ENCODE measurements at regions of chr12 and their contacts with region 1.

Region 1: DNA sequence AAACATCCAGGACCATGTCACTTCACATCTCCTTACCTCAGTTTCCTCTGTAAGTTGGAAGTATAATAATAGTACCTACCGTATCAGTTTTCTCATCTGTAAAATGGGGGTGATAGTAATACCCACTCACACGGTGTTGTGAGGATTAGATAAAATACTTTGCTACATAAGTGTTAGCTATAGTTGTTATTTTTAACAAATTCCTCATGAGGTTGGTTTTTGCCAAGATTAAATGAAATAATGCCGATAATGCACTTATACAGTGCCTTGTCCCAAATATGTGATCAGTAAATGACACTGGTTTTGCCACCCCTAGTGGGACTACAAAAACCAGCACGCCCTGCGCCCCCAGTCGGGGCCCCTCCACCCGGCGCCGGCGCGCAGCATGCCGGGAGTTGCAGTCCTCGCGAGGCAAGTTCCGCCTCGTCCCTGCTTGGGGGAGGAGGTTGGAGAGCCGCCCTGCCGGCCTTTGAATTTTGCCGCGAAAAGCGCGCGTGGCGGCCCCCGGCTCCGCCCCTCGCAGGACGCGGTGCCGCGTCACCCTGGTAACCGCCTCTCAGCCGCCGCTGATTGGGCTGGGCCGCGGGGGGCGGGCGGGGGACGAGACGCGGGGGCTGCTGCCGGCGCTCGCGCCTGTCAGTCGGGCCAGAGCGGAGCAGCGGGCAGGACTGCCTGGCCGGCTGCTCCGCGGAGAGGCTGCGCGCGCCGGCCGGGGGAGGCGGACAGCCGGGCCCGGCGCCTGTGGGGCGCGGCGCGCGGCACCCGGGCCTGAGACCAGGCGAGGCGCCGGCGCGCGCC is at the start of gene FAM222A:
- DNase-seq: peak; percentile 93 to 96
- ATAC-seq: peak; percentile 84 to 85
- H3K4me3 ChIP-seq: peak within 1 kb of the TSS; percentile 57 to 77 (median 60)
- H3K27ac ChIP-seq: peak within 1 kb of the TSS; percentile 73 to 88 (median 82)
- H3K4me1 ChIP-seq: peaks cover 27 to 28% of the 10 kb centered on the region in 2 donors
- H3K27me3 ChIP-seq: no peaks in the 10 kb centered on the region
- CTCF ChIP-seq: peak in 3 of 5 experiments; percentile 14 to 42 (median 16)
- POLR2A ChIP-seq: peak; percentile 87 to 89
- total RNA-seq, gene FAM222A: 7.0 to 24.3 (median 13.5) TPM

Region 2: GRCh38 chr12:109529691-109530640 is 183.4 kb before region 1 on chr12:
- in situ Hi-C with region 1: no loop called
- intact Hi-C with region 1: no loop called
- DNase-seq: no peak
- ATAC-seq: no peak
- H3K4me3 ChIP-seq: no peak overlapping the region
- H3K27ac ChIP-seq: no peak overlapping the region
- H3K4me1 ChIP-seq: no peaks in the 10 kb centered on the region
- H3K27me3 ChIP-seq: no peaks in the 10 kb centered on the region
- CTCF ChIP-seq: no peak
- POLR2A ChIP-seq: no peak

Region 3: GRCh38 chr12:109573029-109573913 is 140.1 kb before region 1 on chr12 and contains the starts of genes MMAB and MVK:
- in situ Hi-C with region 1: no loop called
- intact Hi-C with region 1: loop called (anchors 1 kb)
- DNase-seq: peak; percentile 100
- ATAC-seq: peak; percentile 99
- H3K4me3 ChIP-seq: peak within 1 kb of the TSS; percentile 66 to 85 (median 79)
- H3K27ac ChIP-seq: peak within 1 kb of the TSS; percentile 84 to 95 (median 90)
- H3K4me1 ChIP-seq: peaks cover 18% of the 10 kb centered on the region in 2 donors
- H3K27me3 ChIP-seq: no peaks in the 10 kb centered on the region
- CTCF ChIP-seq: no peak
- POLR2A ChIP-seq: peak; percentile 65 to 79
- total RNA-seq, gene MMAB: 21.2 to 54.3 (median 25.6) TPM
- total RNA-seq, gene MVK: 3.2 to 14.2 (median 9.1) TPM

Region 4: DNA sequence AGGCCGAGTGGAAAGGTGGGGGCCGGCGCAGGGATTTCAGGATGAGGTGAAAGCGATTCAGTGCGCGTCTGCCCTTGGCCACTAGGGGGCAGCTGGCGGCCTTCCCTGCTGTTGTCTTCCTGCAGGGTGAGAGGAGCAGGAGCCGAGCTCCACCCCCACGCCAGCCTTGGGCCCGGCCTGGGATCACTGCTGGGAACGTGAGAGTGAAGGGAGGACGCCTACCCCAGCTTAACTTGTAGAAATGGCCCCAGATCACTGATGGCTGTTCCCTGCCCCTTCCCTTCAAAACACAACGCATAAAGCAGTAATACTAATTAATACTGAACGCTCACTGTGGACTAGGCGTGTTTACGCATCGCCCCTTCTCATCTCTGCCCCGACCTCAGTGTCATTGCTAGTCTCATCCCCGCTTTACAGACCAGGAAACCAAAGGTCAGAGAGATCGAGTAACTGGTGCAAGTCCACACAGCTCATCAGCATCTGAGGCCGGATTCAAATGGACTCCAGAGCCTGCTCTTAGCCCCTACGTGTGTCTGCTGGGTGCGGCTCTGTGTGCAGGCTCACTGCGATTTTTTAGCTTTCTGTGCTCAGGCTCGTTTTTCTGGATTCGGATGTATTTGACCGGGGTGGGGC is 115.5 kb before region 1 on chr12:
- in situ Hi-C with region 1: no loop called
- intact Hi-C with region 1: loop called (anchors 2 kb)
- DNase-seq: peak; percentile 76 to 81
- ATAC-seq: peak; percentile 53 to 60
- H3K4me3 ChIP-seq: no peak overlapping the region
- H3K27ac ChIP-seq: peak overlapping the region; percentile 8 to 61 (median 45)
- H3K4me1 ChIP-seq: peaks cover 22 to 31% of the 10 kb centered on the region in 2 donors
- H3K27me3 ChIP-seq: no peaks in the 10 kb centered on the region
- CTCF ChIP-seq: peak; percentile 94 to 98 (median 95)
- POLR2A ChIP-seq: no peak

Region 5: DNA sequence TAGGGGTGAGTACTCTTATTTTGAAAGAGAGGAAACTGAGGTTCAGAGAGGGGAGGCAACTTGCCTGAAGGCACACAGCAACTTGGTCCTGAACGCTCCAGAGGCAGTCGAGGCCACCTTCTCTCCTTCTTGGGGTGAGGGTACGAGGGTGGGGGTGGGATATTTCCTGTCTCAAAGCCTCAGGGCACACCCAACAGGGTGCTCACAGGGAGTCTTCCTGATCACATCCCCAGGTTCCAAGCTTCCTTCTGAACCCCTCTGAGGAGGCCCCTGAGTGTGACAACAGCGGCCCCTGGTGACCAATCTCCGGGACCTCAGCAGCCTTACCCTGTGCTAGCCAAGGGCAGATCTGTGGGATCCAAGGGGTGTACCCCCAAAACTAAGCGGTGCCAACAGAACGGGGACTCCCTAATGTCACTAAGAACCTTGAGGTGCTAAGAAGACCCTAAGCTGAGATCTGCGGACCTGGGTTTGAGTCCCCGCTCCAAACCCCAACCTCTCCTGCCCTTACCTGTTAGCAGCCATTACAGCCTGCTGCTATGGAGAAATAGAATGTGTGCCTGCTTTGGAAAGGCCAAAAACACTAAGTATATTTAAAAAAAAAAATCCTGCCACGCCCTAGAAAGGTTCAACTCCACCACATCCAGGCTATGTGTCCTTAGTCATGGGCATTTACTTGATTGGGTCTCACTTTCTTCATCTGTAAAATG is 61.9 kb after region 1 on chr12:
- in situ Hi-C with region 1: no loop called
- intact Hi-C with region 1: loop called (anchors 1 kb)
- DNase-seq: peak; percentile 28 to 60
- ATAC-seq: peak; percentile 69 to 79
- H3K4me3 ChIP-seq: no peak overlapping the region
- H3K27ac ChIP-seq: no peak overlapping the region
- H3K4me1 ChIP-seq: peaks cover 7 to 12% of the 10 kb centered on the region in 2 donors
- H3K27me3 ChIP-seq: no peaks in the 10 kb centered on the region
- CTCF ChIP-seq: peak; percentile 85 to 94 (median 89)
- POLR2A ChIP-seq: no peak

Region 6: GRCh38 chr12:109880016-109880931 is 166.9 kb after region 1 on chr12 and contains the start of gene GLTP:
- in situ Hi-C with region 1: no loop called
- intact Hi-C with region 1: loop called (anchors 10 kb)
- DNase-seq: peak; percentile 61 to 76
- ATAC-seq: peak; percentile 91 to 96
- H3K4me3 ChIP-seq: peak within 1 kb of the TSS; percentile 66 to 94 (median 83)
- H3K27ac ChIP-seq: peak within 1 kb of the TSS; percentile 60 to 81 (median 78)
- H3K4me1 ChIP-seq: peaks cover 17 to 20% of the 10 kb centered on the region in 2 donors
- H3K27me3 ChIP-seq: no peaks in the 10 kb centered on the region
- CTCF ChIP-seq: peak in 4 of 5 experiments; percentile 85 to 98 (median 88)
- POLR2A ChIP-seq: peak; percentile 63 to 67
- total RNA-seq, gene GLTP: 18.3 to 34.0 (median 22.4) TPM

Region 7: DNA sequence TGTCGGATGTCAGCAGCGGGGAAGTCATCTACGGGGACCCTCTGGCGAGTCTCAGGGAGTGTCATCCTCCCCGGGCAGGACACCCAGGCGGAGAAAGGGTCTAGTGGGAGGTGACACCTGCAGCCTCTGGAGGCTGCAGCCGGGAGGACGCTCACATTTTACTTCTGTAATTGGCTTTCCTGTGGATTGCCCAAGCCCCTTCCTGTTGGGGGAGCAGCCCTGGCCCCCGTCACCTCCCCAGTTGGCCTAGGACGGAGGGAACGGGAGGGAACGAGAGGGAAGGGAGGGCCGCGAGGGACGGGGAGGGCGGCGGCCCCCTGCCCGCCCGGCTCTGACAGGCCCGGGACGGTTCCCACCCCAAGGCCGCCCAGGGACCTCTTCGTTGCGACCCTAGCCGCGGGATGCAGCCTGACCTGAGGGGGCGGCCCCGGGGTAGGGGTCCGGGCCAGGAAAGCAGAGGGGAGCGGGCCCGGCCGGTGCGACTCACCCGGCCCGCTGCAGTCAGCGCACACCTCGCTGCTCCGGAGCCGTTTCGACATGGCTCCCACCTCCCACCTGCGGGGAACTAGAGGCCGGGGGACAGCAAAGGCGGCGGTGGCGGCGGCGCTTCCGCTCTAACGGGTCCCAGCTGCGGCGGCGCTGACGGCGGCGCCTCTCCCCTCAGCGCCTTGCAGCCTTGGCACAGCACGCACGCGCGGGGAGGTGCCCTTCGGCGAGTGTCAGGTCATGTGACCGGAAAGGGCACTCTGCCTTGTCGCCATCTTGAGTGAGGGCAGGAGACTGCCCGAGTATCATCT is 282.5 kb after region 1 on chr12 and contains the start of gene GIT2:
- in situ Hi-C with region 1: no loop called
- intact Hi-C with region 1: loop called (anchors 1 kb)
- DNase-seq: peak; percentile 90 to 92
- ATAC-seq: peak; percentile 81
- H3K4me3 ChIP-seq: peak within 1 kb of the TSS; percentile 83 to 99 (median 98)
- H3K27ac ChIP-seq: peak within 1 kb of the TSS; percentile 81 to 90 (median 86)
- H3K4me1 ChIP-seq: peaks cover 36 to 53% of the 10 kb centered on the region in 2 donors
- H3K27me3 ChIP-seq: no peaks in the 10 kb centered on the region
- CTCF ChIP-seq: no peak
- POLR2A ChIP-seq: peak; percentile 77 to 78
- total RNA-seq, gene GIT2: 23.4 to 32.1 (median 23.6) TPM

Region 8: DNA sequence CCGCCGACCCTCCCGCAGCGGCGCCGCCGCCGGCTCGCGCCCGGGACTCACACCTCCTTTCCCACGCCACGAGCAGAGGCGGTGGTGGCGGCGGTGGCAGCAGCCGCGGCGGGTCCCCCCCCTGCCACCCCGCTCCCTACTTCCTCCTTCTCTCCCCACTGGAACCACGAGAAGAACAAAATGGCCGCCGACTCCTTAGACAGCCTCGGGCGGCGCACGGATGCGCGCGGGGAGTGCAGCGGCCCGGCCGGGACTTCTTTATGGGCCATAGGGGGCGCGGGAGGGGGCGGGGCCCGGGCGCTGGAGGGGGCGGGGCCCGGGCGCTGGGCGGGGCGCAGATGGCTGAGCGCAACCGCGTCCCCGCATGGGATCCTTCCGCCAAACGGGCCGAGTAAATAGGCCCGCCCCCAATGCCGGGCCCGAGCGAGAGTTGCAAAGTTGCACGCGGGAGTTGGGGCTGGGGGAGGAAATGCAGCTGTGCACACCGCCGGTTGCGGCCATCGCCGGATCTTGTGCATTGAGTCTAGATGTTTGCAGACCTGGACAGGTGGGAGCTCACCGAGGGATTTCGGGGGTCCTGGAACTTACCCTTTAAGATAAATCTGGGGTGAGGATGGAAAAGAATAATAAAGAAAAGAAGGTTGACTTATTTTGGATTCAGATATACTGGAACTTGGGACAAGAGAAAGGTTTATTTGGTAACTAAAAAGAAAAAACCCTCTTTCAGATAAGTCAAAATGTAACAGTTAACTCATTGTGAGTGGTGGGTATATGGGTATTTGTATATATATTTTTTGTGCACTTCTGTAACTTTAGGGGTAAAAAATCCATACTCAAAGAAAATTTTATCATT is 1029.6 kb after region 1 on chr12 and contains the start of gene PPP1CC:
- in situ Hi-C with region 1: no loop called
- intact Hi-C with region 1: loop called (anchors 10 kb)
- DNase-seq: peak; percentile 89 to 92
- ATAC-seq: peak; percentile 88 to 89
- H3K4me3 ChIP-seq: peak within 1 kb of the TSS; percentile 92 to 100 (median 95)
- H3K27ac ChIP-seq: peak within 1 kb of the TSS; percentile 86 to 98 (median 94)
- H3K4me1 ChIP-seq: peaks cover 48% of the 10 kb centered on the region in 2 donors
- H3K27me3 ChIP-seq: no peaks in the 10 kb centered on the region
- CTCF ChIP-seq: peak in 1 of 5 experiments; percentile 23
- POLR2A ChIP-seq: peak; percentile 80 to 81
- total RNA-seq, gene PPP1CC: 96.4 to 226 (median 154) TPM